Activated CD4-positive, alpha-beta T cell treated with anti-CD3 and anti-CD28 coated beads for 36 hours (primary cell): ENCODE measurements at regions of chr6 and their contacts with region 1.

Region 1: DNA sequence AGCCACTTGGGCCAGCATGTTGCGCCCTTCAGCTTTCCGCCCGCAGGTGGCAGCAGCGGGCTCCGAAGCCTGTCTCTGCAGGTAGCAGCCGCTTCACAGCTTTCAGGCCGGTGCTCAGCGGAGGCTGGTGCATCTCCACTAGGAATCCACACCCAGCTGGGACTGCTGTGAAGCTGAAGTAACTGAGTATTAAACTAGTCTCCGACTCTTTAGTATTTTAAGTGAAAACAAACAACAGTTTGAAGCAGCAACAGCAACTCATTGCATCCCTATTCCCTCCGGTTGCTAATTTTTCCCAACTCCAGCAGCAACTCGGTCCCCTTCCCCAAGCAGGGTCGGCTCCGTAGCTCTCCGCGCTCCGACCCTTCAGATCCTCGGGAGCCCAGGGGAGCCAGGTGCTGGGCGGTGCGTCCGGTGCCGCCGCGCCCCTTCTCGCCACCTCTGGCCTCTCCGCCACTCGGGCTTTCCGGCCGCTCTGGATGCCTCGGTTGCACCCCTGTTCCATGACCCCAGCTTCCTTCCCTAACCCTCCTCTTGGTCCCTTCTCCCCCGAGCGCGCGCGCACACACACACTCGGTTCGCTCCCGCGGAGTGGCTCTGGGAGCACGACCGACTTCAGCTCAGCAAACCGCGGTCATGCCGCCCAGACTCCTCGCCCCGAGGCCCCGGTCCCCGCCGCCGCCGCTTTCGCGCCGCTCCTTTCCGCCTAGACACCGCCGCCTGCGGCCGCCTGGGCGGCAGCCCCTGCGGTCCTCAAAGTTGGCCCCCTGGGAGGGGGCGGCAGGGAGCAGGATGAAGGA is 768 bp upstream of the NKAIN2 start:
- DNase-seq: peak; percentile 85
- ATAC-seq: peak; percentile 92
- H3K4me3 Mint-ChIP-seq: peak overlapping the region; percentile 38
- H3K27ac Mint-ChIP-seq: no peak overlapping the region
- H3K4me1 Mint-ChIP-seq: peaks cover 12% of the 10 kb centered on the region
- H3K27me3 Mint-ChIP-seq: peaks cover 38% of the 10 kb centered on the region

Region 2: GRCh38 chr6:123855506-123855905 is 52.6 kb after region 1 on chr6:
- CTCF ChIA-PET with region 1: no interaction called
- POLR2A ChIA-PET with region 1: no interaction called
- intact Hi-C with region 1: no loop called
- DNase-seq: no peak
- ATAC-seq: no peak
- H3K4me3 Mint-ChIP-seq: no peak overlapping the region
- H3K27ac Mint-ChIP-seq: no peak overlapping the region
- H3K4me1 Mint-ChIP-seq: no peaks in the 10 kb centered on the region
- H3K27me3 Mint-ChIP-seq: no peaks in the 10 kb centered on the region

Region 3: DNA sequence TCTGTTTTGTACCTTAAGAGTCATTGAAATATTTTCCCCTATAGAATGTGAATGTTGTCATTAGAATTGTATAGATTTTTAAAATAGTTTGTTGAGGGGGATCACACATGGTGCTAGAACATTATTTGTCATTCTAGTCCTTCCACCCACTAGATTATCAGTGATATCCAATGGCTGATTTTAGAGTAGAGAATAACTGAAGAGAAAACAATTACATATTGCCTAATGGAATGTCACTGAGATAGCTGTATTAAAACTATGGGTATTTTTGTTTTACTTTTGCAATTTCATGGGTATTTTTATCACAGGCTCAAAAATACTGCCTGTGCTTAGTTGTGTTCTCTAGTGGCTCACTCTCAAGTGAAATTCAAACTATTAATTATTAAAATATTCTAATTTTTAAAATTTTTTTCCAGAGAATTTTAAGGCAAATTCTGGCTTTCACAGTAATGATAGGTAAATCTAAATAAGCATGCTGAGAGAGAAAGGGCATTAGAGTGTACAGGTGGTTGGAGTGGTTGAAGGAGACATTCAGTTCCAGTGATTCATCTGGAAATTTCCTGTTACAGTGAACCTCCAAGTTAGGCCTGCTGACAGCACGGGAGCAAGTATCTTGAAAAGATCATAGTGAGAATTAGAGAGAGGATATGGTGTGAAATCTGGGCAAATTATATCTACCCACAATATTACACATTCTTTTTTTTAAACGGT is 400.4 kb after region 1 on chr6:
- CTCF ChIA-PET with region 1: no interaction called
- POLR2A ChIA-PET with region 1: no interaction called
- intact Hi-C with region 1: no loop called
- DNase-seq: no peak
- ATAC-seq: no peak
- H3K4me3 Mint-ChIP-seq: no peak overlapping the region
- H3K27ac Mint-ChIP-seq: no peak overlapping the region
- H3K4me1 Mint-ChIP-seq: no peaks in the 10 kb centered on the region
- H3K27me3 Mint-ChIP-seq: no peaks in the 10 kb centered on the region

Region 4: GRCh38 chr6:124795643-124796463 is 993.0 kb after region 1 on chr6:
- CTCF ChIA-PET with region 1: no interaction called
- POLR2A ChIA-PET with region 1: no interaction called
- intact Hi-C with region 1: loop called (anchors 5 to 10 kb)
- DNase-seq: peak; percentile 17
- ATAC-seq: no peak
- H3K4me3 Mint-ChIP-seq: no peak overlapping the region
- H3K27ac Mint-ChIP-seq: no peak overlapping the region
- H3K4me1 Mint-ChIP-seq: no peaks in the 10 kb centered on the region
- H3K27me3 Mint-ChIP-seq: no peaks in the 10 kb centered on the region

Region 5: GRCh38 chr6:124854338-124854922 is 1051.5 kb after region 1 on chr6:
- CTCF ChIA-PET with region 1: interaction called, 7 read pairs
- POLR2A ChIA-PET with region 1: no interaction called
- intact Hi-C with region 1: loop called (anchors 1 to 2 kb)
- DNase-seq: no peak
- ATAC-seq: no peak
- H3K4me3 Mint-ChIP-seq: no peak overlapping the region
- H3K27ac Mint-ChIP-seq: no peak overlapping the region
- H3K4me1 Mint-ChIP-seq: no peaks in the 10 kb centered on the region
- H3K27me3 Mint-ChIP-seq: no peaks in the 10 kb centered on the region